WTC11 (cell line): ENCODE measurements at regions of chr3 and their contacts with region 1.

Region 1: DNA sequence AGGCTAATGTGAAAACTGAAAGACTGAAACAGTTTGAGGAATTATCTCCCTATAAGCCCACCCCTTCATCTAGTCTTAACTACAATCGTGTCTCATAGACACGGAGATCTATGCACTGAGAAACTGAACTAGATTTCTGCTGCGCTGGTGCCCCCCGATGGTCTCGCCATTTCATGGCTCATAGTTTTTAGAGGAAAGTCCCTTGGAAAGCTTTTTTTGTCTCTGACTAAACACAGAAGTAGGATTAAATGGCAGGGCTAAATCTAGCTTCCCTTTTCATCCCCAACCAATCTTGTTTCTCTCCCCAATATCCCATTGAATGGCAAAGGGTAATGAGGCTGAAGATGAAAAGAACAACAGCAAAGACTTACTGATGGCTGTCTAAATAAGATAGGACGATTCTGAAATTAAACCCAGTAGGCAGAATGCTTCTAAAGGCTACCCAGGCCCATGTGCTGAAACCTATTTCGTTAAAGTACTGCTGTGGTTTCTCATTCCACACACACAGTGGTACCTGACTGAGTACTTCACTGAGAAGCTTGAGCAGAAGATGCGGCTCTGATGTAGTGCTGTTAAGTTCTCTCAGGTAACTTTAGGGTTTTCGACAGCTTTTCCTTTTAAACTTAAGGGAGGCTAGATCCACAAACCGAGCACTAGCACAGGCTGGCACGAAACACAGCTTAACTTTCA is 142.7 kb downstream of the GADL1 start:
- DNase-seq: peak; percentile 54
- ATAC-seq: peak; percentile 59
- H3K4me3 Mint-ChIP-seq: no peak overlapping the region
- H3K27ac Mint-ChIP-seq: no peak overlapping the region
- H3K4me1 Mint-ChIP-seq: peaks cover 36% of the 10 kb centered on the region
- H3K27me3 Mint-ChIP-seq: no peaks in the 10 kb centered on the region
- CTCF ChIP-seq: 0 out of 2 replicates have a peak, but pooled peaks have one; percentile 18

Region 2: DNA sequence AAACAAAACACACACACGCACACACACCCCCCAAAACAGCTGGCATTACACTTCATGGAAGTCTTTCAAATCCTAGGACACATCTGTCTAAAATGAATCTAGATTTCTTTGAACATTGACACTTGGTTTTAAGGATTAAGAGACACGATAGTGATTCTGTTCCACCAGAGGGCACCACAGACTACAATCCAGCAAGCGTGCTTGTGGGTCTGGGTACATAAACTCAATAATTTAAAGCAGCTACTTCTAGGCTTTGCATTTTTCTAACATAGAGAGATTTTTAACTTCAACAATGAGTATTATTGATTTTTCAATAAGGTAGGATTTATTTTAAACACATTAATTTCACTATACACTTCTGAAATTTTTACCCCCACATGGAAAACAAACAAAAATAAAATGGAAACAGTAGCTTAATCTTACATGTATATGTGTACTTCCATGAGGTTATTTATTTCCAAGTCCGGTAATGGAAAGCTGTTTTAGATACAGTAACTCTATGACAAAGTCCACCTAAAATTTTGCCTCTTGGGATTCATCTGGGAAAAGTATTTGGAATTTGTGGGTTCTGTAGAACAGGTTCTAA is 709.4 kb before region 1 on chr3:
- CTCF ChIA-PET with region 1: interaction called, 19 read pairs
- POLR2A ChIA-PET with region 1: no interaction called
- DNase-seq: peak; percentile 58
- ATAC-seq: peak; percentile 73
- H3K4me3 Mint-ChIP-seq: no peak overlapping the region
- H3K27ac Mint-ChIP-seq: no peak overlapping the region
- H3K4me1 Mint-ChIP-seq: peaks cover 33% of the 10 kb centered on the region
- H3K27me3 Mint-ChIP-seq: no peaks in the 10 kb centered on the region
- CTCF ChIP-seq: peak; percentile 48

Region 3: GRCh38 chr3:30693470-30694120 is 58.2 kb before region 1 on chr3:
- CTCF ChIA-PET with region 1: interaction called, 10 read pairs
- POLR2A ChIA-PET with region 1: no interaction called
- DNase-seq: peak; percentile 35
- ATAC-seq: peak; percentile 90
- H3K4me3 Mint-ChIP-seq: no peak overlapping the region
- H3K27ac Mint-ChIP-seq: no peak overlapping the region
- H3K4me1 Mint-ChIP-seq: peaks cover 69% of the 10 kb centered on the region
- H3K27me3 Mint-ChIP-seq: no peaks in the 10 kb centered on the region
- CTCF ChIP-seq: peak; percentile 57

Region 4: DNA sequence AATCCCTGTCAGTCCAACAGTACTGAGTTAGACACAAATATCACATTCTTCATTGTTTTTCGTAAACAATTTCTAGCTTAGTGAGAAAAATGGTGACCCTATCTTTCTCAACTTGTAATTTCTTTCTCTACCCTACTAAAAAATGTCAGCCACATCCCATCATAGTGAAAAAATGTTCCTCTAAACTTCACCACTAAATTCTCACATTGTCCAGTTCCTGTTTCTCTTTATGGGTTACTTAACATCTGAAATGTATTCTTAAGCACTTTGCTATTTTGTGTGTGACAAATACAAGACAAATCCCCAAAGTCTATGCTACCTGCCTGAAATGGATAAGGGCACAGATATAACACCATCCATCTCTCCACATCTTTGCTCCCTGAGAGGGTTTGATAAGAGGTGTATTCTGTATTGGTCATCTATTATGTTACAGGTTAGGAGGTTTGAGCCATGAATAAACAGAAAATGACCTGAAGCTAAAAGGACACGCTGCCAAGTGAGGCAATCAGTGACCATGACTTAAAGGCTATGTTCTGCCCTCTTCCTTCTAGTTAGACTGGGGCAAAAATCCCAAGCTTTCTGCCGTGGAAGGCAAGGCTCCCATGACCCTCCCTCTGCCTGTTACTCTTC is 24.5 kb after region 1 on chr3:
- CTCF ChIA-PET with region 1: no interaction called
- POLR2A ChIA-PET with region 1: no interaction called
- DNase-seq: no peak
- ATAC-seq: no peak
- H3K4me3 Mint-ChIP-seq: no peak overlapping the region
- H3K27ac Mint-ChIP-seq: no peak overlapping the region
- H3K4me1 Mint-ChIP-seq: peaks cover 3% of the 10 kb centered on the region
- H3K27me3 Mint-ChIP-seq: no peaks in the 10 kb centered on the region
- CTCF ChIP-seq: no peak